ENCODE measurements at regions of chr2 and their contacts with region 1.

Region 1: DNA sequence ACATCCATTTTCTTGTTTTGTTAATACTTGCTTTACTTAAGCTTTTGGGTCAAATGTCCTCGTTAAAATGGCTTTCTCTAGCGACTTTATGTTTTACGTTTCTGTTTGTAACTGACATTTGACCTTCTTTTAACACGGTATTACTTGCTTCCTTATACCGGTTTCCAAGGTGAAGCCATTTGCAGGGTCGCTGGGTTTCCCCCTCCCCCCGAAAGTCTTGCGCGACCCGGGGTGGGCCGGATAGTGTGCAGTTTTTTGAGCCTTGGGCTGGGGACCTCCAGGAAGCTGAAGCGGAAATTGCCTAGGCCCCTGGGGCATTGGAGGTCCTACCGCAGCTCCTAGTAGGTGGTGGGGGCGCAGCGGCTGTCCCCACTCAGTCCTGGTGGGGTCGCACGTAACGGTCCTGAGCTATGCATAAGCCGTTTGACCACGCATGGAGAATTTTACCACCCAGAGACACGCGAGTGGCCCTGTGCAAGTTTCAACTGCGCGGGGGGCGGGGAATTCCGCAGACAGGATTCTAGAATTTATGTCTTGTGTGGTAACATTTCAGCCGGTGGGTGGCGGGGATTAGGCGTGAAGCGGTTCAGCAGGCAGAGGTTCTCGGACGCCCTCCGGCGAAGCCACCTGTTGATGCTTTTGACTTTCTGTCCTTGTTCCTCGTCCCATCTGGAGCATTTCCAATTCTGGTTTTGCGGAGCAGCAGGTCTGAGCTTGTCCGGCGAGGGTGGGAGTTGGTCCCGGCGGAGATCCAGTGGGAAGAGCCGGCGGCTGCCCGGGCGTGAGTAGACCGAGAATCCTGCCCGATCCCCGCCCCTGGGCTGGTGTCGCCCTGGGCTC is 2.4 kb downstream of the CFLAR start:
- DNase-seq: peak; percentile 90 to 96
- ATAC-seq: peak; percentile 61 to 72 (median 68)
- H3K4me3 ChIP-seq: peak overlapping the region; percentile 100
- H3K27ac ChIP-seq: peak overlapping the region; percentile 100
- H3K4me1 ChIP-seq: peaks cover 52% of the 10 kb centered on the region
- H3K27me3 ChIP-seq: no peaks in the 10 kb centered on the region
- CTCF ChIP-seq: peak; percentile 51

Region 2: DNA sequence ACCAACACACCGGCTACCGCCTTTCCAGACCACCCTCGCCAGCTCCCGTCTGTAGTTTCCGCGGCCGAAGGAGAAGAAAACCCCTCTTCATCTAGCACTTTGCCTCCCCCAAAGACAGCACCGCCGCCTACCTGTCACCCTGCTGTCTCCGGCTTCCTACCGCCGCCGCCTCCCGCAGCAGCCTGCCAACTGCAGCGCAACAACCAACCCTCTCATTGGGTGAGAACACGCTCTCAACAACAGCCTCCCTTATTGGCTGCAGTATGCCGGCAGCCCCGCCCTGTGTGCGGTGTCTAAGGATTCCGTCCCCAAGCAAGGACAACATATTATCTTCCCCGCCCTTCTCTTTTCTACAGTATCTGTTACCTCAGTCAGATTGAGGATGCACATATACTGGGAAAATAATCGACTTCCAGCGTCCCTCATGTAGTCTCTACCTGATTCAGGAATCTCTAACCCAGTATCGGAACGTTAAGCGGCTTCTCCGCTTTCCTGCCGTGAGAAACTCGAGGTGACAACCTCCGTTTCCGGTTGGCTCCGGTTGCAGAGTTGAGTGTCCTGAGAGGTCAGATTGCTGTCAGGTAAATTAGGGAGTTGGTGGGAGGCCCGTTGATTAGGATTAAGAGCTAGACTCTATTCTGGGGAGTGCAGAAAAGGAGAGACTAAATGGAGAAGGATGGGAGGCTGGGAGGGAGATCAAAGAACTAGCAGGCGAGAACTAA is 46.7 kb before region 1 on chr2 and contains the starts of genes HYCC2 and NDUFB3:
- intact Hi-C with region 1: loop called (anchors 5 kb)
- DNase-seq: peak; percentile 87 to 95
- ATAC-seq: peak; percentile 98 to 100 (median 99)
- H3K4me3 ChIP-seq: peak within 1 kb of the TSS; percentile 92
- H3K27ac ChIP-seq: peak within 1 kb of the TSS; percentile 95
- H3K4me1 ChIP-seq: peaks cover 55% of the 10 kb centered on the region
- H3K27me3 ChIP-seq: no peaks in the 10 kb centered on the region
- CTCF ChIP-seq: peak; percentile 36
- total RNA-seq, gene HYCC2: 7.6 to 8.6 (median 8.1) TPM
- total RNA-seq, gene NDUFB3: 188 to 271 (median 261) TPM

Region 3: GRCh38 chr2:201151127-201151981 is 33.0 kb after region 1 on chr2:
- intact Hi-C with region 1: loop called in 1 of 2 experiments (anchors 5 kb)
- DNase-seq: no peak
- ATAC-seq: peak; percentile 20 to 34 (median 26)
- H3K4me3 ChIP-seq: peak overlapping the region; percentile 20
- H3K27ac ChIP-seq: peak overlapping the region; percentile 76
- H3K4me1 ChIP-seq: peaks cover 42% of the 10 kb centered on the region
- H3K27me3 ChIP-seq: no peaks in the 10 kb centered on the region
- CTCF ChIP-seq: no peak

Region 4: GRCh38 chr2:201164166-201164565 is 45.8 kb after region 1 on chr2:
- intact Hi-C with region 1: loop called in 1 of 2 experiments (anchors 5 kb)
- DNase-seq: no peak
- ATAC-seq: peak in 3 of 4 donors; percentile 21 to 32 (median 22)
- H3K4me3 ChIP-seq: no peak overlapping the region
- H3K27ac ChIP-seq: no peak overlapping the region
- H3K4me1 ChIP-seq: no peaks in the 10 kb centered on the region
- H3K27me3 ChIP-seq: no peaks in the 10 kb centered on the region
- CTCF ChIP-seq: no peak

Region 5: DNA sequence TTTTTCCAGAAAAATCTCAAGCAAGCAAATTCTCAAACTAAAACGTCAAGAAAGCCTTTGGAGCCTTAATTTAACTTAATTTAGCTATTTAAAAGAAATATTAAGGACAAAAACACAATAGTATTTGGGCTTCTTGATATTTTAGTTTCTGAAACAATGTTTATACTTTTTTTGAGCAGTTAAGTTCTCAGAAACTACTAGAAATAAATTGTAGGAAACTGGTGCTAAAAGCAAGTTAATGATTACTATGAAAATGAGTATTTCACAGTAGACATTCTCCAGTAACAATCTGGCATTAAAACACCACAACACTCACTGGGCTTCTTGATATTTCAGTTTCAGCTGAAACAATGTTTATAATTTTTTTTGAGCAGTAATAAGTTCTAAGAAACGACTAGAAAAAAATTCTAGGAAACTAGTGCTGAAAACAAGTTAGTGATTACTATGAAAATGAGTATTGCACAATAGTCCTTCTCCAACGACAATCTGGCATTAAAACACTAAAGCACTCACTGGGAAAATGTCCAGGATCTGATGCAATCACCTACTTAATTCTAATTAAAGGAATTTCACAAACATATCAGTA is 287.8 kb after region 1 on chr2:
- intact Hi-C with region 1: no loop called
- DNase-seq: no peak
- ATAC-seq: peak in 3 of 4 donors; percentile 28 to 71 (median 40)
- H3K4me3 ChIP-seq: peak overlapping the region; percentile 50
- H3K27ac ChIP-seq: peak overlapping the region; percentile 73
- H3K4me1 ChIP-seq: peaks cover 68% of the 10 kb centered on the region
- H3K27me3 ChIP-seq: no peaks in the 10 kb centered on the region
- CTCF ChIP-seq: no peak